A673 (cell line): ENCODE measurements at regions of chrX and their contacts with region 1.

Region 1: GRCh38 chrX:109384699-109385098 is 97.2 kb downstream of the GUCY2F start:
- DNase-seq: peak; percentile 40
- H3K4me3 ChIP-seq: no peak overlapping the region
- H3K27ac ChIP-seq: no peak overlapping the region
- H3K4me1 ChIP-seq: no peaks in the 10 kb centered on the region
- H3K27me3 ChIP-seq: no peaks in the 10 kb centered on the region
- CTCF ChIP-seq: peak; percentile 59

Region 2: GRCh38 chrX:108584617-108585211 is 800.0 kb before region 1 on chrX:
- CTCF ChIA-PET with region 1: no interaction called
- POLR2A ChIA-PET with region 1: no interaction called
- intact Hi-C with region 1: loop called (anchors 5 kb)
- DNase-seq: peak; percentile 31
- H3K4me3 ChIP-seq: no peak overlapping the region
- H3K27ac ChIP-seq: no peak overlapping the region
- H3K4me1 ChIP-seq: no peaks in the 10 kb centered on the region
- H3K27me3 ChIP-seq: peaks cover 7% of the 10 kb centered on the region
- CTCF ChIP-seq: peak; percentile 58